Natural killer cell (primary cell): ENCODE measurements at regions of chr5 and their contacts with region 1.

Region 1: GRCh38 chr5:40679155-40679913 is 381 bp upstream of the PTGER4 start:
- DNase-seq: peak; percentile 80 to 94
- ATAC-seq: peak; percentile 68 to 84 (median 77)
- H3K4me3 ChIP-seq: peak overlapping the region; percentile 73
- H3K4me3 Mint-ChIP-seq: peak overlapping the region; percentile 99
- H3K27ac ChIP-seq: peak overlapping the region; percentile 88
- H3K27ac Mint-ChIP-seq: peak overlapping the region; percentile 91 to 95
- H3K4me1 ChIP-seq: peaks cover 28% of the 10 kb centered on the region
- H3K4me1 Mint-ChIP-seq: peaks cover 87 to 91% of the 10 kb centered on the region in 2 donors
- H3K27me3 ChIP-seq: no peaks in the 10 kb centered on the region
- H3K27me3 Mint-ChIP-seq: no peaks in the 10 kb centered on the region
- CTCF ChIP-seq: no peak

Region 2: DNA sequence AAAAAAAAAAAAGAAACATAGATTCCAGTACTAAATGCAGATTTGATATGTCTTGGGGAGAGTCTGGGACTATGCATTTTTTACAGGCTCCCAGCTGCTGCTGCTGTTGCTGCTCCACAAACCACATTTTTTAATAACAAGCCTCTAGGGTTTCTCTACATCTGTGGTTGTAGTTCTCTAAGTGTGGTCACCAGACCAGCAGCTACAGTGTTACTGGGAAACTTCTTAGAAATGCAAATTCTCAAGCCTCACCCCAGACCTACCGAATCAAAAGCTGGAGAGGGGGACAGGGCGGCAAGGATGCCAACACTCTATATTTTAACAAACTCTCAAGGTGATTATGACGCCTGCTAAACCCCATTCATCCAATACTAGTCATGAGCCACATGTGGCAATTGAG is 293.0 kb before region 1 on chr5:
- intact Hi-C with region 1: loop called (anchors 5 kb)
- DNase-seq: peak; percentile 34 to 68
- ATAC-seq: peak; percentile 79 to 84 (median 82)
- H3K4me3 ChIP-seq: no peak overlapping the region
- H3K4me3 Mint-ChIP-seq: peak overlapping the region; percentile 61
- H3K27ac ChIP-seq: peak overlapping the region; percentile 34
- H3K27ac Mint-ChIP-seq: peak overlapping the region; percentile 75 to 86
- H3K4me1 ChIP-seq: peaks cover 26% of the 10 kb centered on the region
- H3K4me1 Mint-ChIP-seq: peaks cover 75 to 78% of the 10 kb centered on the region in 2 donors
- H3K27me3 ChIP-seq: no peaks in the 10 kb centered on the region
- H3K27me3 Mint-ChIP-seq: no peaks in the 10 kb centered on the region
- CTCF ChIP-seq: no peak